ENCODE measurements at regions of chr4 and their contacts with region 1.

Region 1: GRCh38 chr4:67087897-67088296 is 457.4 kb downstream of the CENPC start:
- DNase-seq: peak; percentile 10
- H3K4me3 ChIP-seq: no peak overlapping the region
- H3K27ac ChIP-seq: no peak overlapping the region
- H3K4me1 ChIP-seq: no peaks in the 10 kb centered on the region
- H3K27me3 ChIP-seq: no peaks in the 10 kb centered on the region
- CTCF ChIP-seq: peak; percentile 54
- EP300 ChIP-seq: no peak
- RAD21 ChIP-seq: peak; percentile 55

Region 2: DNA sequence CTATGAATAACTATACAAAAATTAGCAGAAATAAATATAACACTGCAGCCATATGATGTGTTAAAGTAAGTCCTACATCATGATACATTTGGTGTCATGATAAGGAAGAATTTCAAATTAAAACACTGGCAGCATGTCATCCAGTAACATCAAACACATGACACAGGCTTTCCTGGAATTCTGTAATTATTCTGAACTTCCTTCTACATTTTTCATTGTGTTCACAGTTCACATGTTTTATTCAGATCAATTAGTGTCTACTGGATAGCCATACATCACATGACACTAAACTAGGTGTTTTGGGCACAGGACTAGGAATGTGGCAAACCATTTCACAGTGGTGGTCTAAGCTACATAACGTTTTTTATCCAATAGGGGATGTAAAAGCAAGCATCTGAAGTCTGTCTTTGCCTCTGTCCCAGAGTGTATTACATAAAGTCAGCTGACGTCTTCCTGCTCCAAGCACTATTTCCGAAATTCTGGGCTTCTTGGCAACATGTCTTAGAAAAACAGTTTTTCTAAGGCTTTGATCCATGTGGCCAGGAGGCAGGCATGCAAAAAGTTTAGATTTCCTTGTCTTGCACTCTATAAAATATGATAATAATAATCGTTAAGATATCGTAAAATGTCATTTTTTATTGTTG is 250.5 kb before region 1 on chr4:
- CTCF ChIA-PET with region 1: no interaction called
- POLR2A ChIA-PET with region 1: no interaction called
- DNase-seq: no peak
- H3K4me3 ChIP-seq: no peak overlapping the region
- H3K27ac ChIP-seq: no peak overlapping the region
- H3K4me1 ChIP-seq: no peaks in the 10 kb centered on the region
- H3K27me3 ChIP-seq: no peaks in the 10 kb centered on the region
- CTCF ChIP-seq: no peak
- EP300 ChIP-seq: no peak
- RAD21 ChIP-seq: no peak

Region 3: DNA sequence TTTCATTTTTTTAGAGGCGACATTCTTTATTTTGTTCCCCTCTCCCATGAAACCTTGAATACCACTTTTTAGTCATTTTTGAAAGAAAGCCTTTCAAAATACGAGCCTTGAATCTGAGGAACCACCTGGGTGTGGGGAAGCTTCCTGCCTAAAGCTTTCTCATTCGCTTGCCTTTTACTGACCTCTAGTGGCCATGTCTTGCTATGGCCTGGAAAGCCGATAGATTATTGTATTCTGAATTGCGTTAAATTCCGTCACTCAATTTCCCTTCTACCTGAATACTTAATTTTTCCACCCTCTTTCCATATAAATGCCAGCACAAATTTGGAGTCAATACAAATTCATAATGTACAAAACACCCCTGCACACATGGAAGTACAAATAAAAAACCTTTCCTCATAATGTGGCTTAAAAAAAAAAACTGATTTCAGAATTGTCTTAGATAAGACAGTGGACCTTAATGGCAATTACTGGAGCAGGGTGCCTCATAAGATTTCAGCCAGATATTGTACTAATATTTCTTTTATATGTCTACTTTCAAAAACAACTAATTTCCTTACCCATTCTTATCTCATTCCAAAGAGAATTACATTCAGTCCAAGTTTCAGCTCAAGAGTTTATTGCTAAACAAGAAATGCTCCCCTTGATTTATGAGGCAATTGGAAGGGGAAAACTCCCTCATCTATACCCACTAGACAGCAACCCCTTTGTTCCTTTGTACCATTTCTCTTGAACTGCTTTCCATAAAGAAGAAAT is 239.5 kb after region 1 on chr4:
- CTCF ChIA-PET with region 1: interaction called, 35 read pairs
- POLR2A ChIA-PET with region 1: no interaction called
- DNase-seq: peak; percentile 55
- H3K4me3 ChIP-seq: no peak overlapping the region; a peak in 1 of 4 replicates
- H3K27ac ChIP-seq: no peak overlapping the region
- H3K4me1 ChIP-seq: no peaks in the 10 kb centered on the region
- H3K27me3 ChIP-seq: no peaks in the 10 kb centered on the region; the same call in 1 of the 2 replicates
- CTCF ChIP-seq: peak; percentile 96
- EP300 ChIP-seq: no peak
- RAD21 ChIP-seq: peak; percentile 91

Measured in SK-N-SH (cell line).